ENCODE measurements at regions of chr6 and their contacts with region 1.

Region 1: DNA sequence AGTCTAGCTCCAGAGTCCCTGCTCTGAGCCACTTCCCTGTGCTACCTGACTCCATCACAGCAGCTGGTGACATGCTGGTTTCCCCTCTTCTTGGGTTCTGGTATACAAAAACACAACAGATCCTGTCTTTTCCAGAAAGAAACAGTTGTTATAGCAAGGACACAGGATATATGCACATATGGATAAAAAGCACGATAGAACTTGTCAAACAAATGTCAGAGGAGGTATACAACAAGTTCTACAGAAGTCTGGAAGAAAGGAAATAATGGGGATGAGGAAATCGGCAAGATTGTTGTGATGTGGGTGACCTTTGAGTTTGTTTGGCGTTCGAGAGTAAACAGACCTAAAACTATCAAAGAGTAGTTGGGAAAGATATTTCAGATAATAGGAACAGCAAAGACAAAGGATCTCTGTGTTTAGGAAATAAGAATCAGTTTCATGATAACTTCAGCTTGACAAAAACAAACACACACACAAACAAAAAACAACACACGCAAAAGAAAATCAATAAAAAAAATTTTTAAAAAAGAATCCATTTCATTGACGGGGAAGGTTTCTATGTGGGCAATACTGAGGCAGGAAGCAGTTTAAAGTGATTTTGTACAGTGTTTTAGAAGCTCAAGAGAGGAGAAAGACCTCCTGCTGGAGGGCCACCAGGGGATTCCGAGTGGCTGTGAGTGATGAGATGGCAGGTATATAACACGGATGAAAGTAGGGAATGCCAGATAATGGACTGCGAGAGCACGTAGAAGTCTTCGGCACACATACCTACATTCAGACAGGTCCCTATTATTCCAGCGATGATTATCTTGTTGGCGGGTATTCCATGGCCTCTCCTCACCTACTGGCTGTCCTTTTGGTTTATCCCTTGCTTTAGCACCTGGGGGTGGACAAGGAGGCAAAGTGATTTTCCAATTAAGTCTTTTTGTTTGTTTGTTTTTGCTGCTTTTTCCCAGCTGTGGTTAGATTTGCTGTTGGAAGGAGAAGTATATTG is 174.9 kb downstream of the HS3ST5 start:
- DNase-seq: peak in 1 of 10 donors; percentile 24

Region 2: GRCh38 chr6:113707194-113707593 is 460.7 kb before region 1 on chr6:
- intact Hi-C with region 1: no loop called
- DNase-seq: no peak

Region 3: DNA sequence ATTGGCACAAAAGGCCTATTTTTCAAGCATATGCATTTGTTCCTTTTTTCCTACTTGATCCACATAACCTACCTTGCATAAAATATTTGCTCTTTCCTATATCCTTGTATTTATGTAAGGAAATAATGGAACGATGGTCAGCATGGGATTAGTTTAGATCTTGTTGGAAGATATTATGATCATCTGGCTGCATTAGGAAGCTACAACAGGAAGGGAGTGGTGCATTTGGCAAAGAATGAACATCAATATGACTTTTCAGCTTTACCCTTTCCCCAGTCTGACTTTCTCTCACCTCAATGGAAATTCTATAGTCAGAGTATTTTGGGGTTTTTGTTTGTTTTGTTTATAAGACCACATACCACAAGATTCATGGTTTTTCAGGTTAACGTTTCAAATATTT is 108.9 kb after region 1 on chr6:
- intact Hi-C with region 1: loop called (anchors 10 kb)
- DNase-seq: no peak

Measured in posterior cingulate gyrus (tissue), 11 donors.